PC-9 (cell line): ENCODE measurements at regions of chr20 and their contacts with region 1.

Region 1: DNA sequence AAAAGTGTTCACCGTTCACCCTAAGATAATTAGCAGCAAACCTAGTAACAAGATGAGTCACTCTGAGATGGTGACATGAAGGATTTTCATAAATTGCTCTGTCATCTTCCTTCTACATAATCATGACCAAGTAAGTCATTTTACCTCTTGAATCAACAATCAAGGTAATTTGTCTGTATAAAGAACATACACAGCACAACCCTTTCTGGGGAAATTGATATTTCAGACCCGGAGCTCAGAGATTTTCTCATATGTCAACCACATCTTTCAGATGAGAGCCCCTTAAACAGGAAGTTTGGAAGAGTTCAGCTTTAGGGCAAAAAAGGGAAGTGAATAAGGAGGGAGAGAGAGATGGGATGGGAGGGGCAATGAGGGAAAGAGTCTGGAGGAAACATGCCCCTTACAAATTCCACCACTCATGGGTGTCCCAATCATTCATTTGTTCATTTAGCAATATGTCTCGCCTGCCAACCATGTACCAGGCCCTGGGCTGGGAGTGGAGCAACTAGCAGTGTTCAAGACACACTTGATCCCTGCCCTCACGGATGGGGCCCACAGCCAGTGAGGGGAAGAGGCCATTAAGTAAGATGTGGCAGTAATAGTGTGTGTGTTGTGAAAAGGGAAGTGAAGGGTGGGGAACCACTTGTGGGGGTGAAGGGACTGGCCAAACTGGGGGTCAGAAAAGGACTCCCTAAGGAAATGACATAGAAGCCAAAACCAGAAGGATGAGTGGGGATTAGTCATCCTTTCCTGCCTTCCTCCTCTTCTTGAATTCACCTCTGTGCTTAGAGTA is 190.9 kb downstream of the MAFB start:
- DNase-seq: peak in 1 of 2 experiments; percentile 57
- H3K4me3 ChIP-seq: no peak overlapping the region
- H3K27ac ChIP-seq: peak overlapping the region; percentile 74
- H3K4me1 ChIP-seq: peaks cover 19% of the 10 kb centered on the region
- H3K27me3 ChIP-seq: no peaks in the 10 kb centered on the region
- CTCF ChIP-seq: no peak

Region 2: DNA sequence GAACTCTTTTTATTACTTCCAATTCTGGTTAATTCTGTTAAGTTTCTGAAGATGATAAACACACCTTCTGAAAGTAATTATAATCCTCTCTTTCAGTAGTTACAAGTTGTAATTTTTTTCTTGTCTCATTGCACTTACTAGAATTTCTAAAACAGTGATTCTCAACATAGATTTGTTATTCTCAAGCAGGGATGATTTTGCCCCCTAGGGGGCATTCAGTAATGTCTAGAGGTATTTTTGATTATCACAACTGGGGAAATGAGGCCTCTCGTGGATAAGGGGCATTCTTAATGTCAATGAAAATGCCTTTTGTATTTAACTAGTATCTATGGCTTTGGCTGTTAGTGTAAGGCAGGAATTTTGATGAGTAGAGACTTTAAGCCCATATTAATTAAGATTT is 230.4 kb after region 1 on chr20:
- CTCF ChIA-PET with region 1: no interaction called
- POLR2A ChIA-PET with region 1: interaction called, 13 read pairs
- intact Hi-C with region 1: no loop called
- DNase-seq: no peak
- H3K4me3 ChIP-seq: no peak overlapping the region
- H3K27ac ChIP-seq: no peak overlapping the region
- H3K4me1 ChIP-seq: no peaks in the 10 kb centered on the region
- H3K27me3 ChIP-seq: peaks cover 33% of the 10 kb centered on the region
- CTCF ChIP-seq: peak; percentile 56; the same call in 1 of the 2 replicates

Region 3: DNA sequence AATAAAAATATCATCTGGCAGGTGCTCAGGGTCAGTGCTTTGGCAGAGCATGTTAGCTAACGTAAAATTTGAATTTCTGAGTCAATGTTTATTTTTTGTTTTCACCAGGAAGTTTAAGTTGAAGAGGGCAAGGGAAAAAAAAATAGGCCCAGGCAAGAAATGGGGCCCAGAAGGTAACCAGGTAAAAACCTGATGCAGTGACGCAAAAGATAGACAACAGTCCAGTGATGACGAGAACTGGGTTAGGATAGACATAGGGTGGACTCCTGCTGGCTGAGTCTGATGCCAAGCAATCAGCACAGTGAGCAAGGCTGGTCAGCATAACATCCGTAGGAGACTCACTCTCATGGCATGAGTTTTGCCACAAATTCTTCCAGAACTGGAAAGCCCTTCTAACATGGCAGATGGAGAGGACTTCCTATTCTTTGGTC is 777.2 kb after region 1 on chr20:
- CTCF ChIA-PET with region 1: no interaction called
- POLR2A ChIA-PET with region 1: no interaction called
- intact Hi-C with region 1: no loop called
- DNase-seq: no peak
- H3K4me3 ChIP-seq: no peak overlapping the region
- H3K27ac ChIP-seq: no peak overlapping the region
- H3K4me1 ChIP-seq: no peaks in the 10 kb centered on the region
- H3K27me3 ChIP-seq: no peaks in the 10 kb centered on the region
- CTCF ChIP-seq: no peak